ENCODE measurements at regions of chr1 and their contacts with region 1.

Region 1: DNA sequence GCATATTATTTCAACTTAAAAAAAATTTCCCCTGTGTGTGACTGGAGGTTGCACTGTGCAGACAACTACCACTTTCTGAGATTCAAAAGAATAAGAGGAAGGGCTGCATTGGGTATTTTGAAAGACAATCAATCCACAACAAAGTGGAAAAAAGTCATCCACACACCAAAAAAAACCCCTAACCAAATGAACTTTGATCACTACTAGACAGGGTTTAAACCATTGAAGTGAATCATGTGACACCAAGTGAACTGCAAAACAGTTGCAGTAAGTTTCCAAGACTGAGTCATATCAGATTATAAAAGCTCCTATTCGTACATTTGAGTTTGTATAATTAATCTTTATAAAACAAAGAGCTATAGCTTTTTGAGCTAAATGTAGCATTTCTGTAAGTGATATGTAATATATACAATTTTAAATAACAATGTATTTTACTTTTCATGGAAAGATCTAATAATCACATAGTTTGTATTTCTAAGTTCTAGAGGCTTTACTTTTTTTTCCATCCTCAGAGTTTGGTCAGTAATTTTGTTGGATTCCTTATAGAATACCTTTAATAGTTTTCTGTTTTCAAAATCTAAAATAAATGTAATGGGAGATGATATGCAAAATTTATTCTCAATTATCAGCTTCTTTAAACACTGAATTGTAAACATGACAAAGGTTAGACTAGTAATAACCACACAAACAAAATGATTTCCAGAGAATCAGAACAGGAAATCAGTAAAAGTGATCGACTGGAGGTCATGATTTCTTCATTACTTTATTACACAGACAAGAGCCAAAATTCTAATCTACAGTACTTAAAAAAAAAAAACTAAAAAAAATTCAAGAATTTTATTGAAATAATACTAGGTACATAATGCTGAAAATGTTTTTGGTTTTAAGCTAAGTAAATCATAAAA is 50.5 kb upstream of the GFI1 start:
- DNase-seq: no peak
- H3K4me3 Mint-ChIP-seq: peak overlapping the region; percentile 54
- H3K27ac Mint-ChIP-seq: peak overlapping the region; percentile 98
- H3K4me1 Mint-ChIP-seq: peaks cover 86% of the 10 kb centered on the region
- H3K27me3 Mint-ChIP-seq: no peaks in the 10 kb centered on the region

Region 2: GRCh38 chr1:92080128-92080985 is 456.9 kb before region 1 on chr1 and contains the start of gene BTBD8:
- CTCF ChIA-PET with region 1: no interaction called
- POLR2A ChIA-PET with region 1: no interaction called
- intact Hi-C with region 1: loop called (anchors 2 kb)
- DNase-seq: peak; percentile 90
- H3K4me3 Mint-ChIP-seq: peak within 1 kb of the TSS; percentile 96
- H3K27ac Mint-ChIP-seq: peak within 1 kb of the TSS; percentile 74
- H3K4me1 Mint-ChIP-seq: peaks cover 5% of the 10 kb centered on the region
- H3K27me3 Mint-ChIP-seq: no peaks in the 10 kb centered on the region
- total RNA-seq, gene BTBD8: 2.9 TPM

Region 3: GRCh38 chr1:92367496-92367895 is 169.7 kb before region 1 on chr1:
- CTCF ChIA-PET with region 1: no interaction called
- POLR2A ChIA-PET with region 1: interaction called, 3 read pairs
- intact Hi-C with region 1: loop called (anchors 1 kb)
- DNase-seq: no peak
- H3K4me3 Mint-ChIP-seq: no peak overlapping the region
- H3K27ac Mint-ChIP-seq: no peak overlapping the region
- H3K4me1 Mint-ChIP-seq: peaks cover 38% of the 10 kb centered on the region
- H3K27me3 Mint-ChIP-seq: no peaks in the 10 kb centered on the region

Region 4: DNA sequence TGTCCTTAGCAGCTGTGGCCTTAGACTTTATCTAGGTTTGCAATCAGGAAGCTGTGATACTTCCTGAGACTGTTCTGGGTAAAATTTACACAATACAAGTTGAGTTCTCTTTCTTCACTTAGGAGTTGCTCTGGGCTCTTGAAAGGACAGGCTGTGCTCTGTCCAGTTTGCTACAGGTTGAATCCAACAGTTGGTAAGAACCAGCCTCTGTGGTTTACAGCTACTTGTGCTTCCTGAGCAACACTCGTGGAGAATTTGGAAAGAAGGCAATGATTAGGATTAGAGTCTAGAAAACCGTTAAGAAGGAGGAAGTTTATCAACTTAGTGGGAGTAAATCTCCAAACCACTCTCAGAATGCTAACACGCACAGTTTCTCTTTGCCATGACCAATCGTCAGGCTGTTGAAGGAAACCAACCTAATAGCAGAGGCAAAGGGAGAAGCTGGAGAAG is 77.3 kb before region 1 on chr1:
- CTCF ChIA-PET with region 1: no interaction called
- POLR2A ChIA-PET with region 1: no interaction called
- intact Hi-C with region 1: no loop called
- DNase-seq: no peak
- H3K4me3 Mint-ChIP-seq: no peak overlapping the region
- H3K27ac Mint-ChIP-seq: no peak overlapping the region
- H3K4me1 Mint-ChIP-seq: peaks cover 39% of the 10 kb centered on the region
- H3K27me3 Mint-ChIP-seq: no peaks in the 10 kb centered on the region

Region 5: GRCh38 chr1:92485381-92486257 is 51.6 kb before region 1 on chr1:
- CTCF ChIA-PET with region 1: interaction called, 38 read pairs
- POLR2A ChIA-PET with region 1: interaction called, 154 read pairs
- intact Hi-C with region 1: loop called (anchors 1 kb)
- DNase-seq: peak; percentile 93
- H3K4me3 Mint-ChIP-seq: peak overlapping the region; percentile 90
- H3K27ac Mint-ChIP-seq: peak overlapping the region; percentile 98
- H3K4me1 Mint-ChIP-seq: peaks cover 33% of the 10 kb centered on the region
- H3K27me3 Mint-ChIP-seq: no peaks in the 10 kb centered on the region

Region 6: DNA sequence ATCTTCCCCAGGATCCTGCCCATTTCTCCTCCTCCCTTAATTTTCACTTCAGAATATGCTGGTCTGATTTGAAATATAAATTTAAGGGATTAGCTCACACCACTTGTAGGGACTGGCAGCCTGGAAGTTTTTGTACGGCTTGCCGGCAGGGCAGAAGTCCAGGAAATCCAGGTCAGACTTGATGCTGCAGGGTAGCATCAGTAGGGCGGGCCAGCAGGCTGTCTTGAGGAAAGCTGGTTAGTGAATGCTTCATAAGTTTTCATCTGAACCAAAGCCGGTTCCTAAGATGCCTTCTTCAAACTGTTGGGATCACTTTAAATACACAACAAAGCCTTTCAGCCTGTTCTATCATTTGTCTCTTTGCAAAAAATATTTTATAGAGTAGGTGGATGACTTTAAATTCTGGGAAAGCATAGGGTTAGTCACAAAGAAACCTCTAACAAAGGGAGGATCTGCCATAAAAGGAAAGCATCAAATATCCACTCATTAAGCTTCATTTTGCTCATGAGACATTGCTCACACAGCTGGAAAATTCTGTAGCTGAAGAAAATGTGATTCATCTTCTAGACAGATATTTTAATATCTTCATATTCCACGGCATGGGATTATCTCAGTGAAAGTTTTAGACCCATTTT is 40.1 kb after region 1 on chr1:
- CTCF ChIA-PET with region 1: interaction called, 14 read pairs
- POLR2A ChIA-PET with region 1: interaction called, 38 read pairs
- intact Hi-C with region 1: loop called (anchors 2 kb)
- DNase-seq: peak; percentile 31
- H3K4me3 Mint-ChIP-seq: peak overlapping the region; percentile 93
- H3K27ac Mint-ChIP-seq: peak overlapping the region; percentile 96
- H3K4me1 Mint-ChIP-seq: peaks cover 54% of the 10 kb centered on the region
- H3K27me3 Mint-ChIP-seq: no peaks in the 10 kb centered on the region

Region 7: DNA sequence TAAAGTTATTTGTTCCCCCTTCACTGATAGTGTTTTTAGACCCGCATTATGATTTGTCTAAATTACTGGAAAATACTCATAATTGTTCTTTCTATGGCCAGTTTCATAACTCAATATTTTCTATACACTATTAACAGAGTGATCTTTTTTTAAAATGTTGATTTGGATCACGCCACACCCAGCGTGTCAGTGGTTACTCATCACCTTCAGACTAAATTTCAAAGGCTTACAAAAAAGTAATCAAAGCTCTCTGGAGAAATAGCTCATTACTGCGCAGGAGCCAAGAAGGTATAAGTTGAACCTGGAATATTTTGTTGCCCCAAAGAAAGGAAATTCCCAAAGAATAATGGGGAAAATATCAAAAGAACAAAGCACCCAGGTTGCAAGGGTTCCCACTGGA is 142.7 kb after region 1 on chr1:
- CTCF ChIA-PET with region 1: no interaction called
- POLR2A ChIA-PET with region 1: no interaction called
- intact Hi-C with region 1: no loop called
- DNase-seq: no peak
- H3K4me3 Mint-ChIP-seq: no peak overlapping the region
- H3K27ac Mint-ChIP-seq: no peak overlapping the region
- H3K4me1 Mint-ChIP-seq: no peaks in the 10 kb centered on the region
- H3K27me3 Mint-ChIP-seq: peaks cover 5% of the 10 kb centered on the region

Region 8: DNA sequence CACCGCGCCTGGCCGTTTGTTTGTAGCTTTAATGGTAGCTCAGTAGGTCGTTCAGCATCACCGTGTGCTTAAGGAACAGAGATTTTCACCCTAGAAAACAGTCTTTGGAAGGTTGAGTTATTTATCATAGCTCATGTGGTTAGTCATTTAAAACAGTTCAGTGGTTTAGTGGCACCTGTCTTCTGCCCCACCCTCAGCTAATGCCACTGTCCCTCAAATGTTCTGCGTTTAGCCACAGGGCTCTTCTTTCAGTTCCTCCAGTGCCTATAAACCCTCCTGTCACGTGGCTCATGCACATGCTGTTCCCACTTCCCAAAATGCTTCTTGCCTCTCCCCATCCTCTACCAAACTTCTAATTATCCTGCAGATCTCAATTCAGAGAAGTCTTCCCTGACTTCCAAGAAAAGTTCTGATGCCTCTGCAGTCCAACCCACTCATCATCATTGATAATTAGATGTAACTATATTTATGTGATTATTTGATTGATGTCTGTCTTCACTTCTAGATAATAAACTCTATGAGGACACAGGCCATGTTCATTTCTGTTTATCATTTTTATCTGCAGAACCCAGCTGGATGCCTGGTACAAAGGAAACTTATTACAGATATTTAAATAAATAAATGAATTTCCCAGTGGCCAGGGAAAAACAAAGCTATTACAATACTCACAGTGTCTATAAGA is 438.5 kb after region 1 on chr1:
- CTCF ChIA-PET with region 1: no interaction called
- POLR2A ChIA-PET with region 1: interaction called, 3 read pairs
- intact Hi-C with region 1: loop called (anchors 5 kb)
- DNase-seq: peak; percentile 51
- H3K4me3 Mint-ChIP-seq: no peak overlapping the region
- H3K27ac Mint-ChIP-seq: peak overlapping the region; percentile 62
- H3K4me1 Mint-ChIP-seq: peaks cover 63% of the 10 kb centered on the region
- H3K27me3 Mint-ChIP-seq: no peaks in the 10 kb centered on the region

Measured in activated CD4-positive, alpha-beta memory T cell treated with anti-CD3 and anti-CD28 coated beads for 36 hours (primary cell).